Activated CD4-positive, alpha-beta T cell treated with anti-CD3 and anti-CD28 coated beads, Interleukin-2, amount 10 ng/mL, durations not matched to agents 24 days and 14 days (primary cell): ENCODE measurements at regions of chr1 and their contacts with region 1.

Region 1: DNA sequence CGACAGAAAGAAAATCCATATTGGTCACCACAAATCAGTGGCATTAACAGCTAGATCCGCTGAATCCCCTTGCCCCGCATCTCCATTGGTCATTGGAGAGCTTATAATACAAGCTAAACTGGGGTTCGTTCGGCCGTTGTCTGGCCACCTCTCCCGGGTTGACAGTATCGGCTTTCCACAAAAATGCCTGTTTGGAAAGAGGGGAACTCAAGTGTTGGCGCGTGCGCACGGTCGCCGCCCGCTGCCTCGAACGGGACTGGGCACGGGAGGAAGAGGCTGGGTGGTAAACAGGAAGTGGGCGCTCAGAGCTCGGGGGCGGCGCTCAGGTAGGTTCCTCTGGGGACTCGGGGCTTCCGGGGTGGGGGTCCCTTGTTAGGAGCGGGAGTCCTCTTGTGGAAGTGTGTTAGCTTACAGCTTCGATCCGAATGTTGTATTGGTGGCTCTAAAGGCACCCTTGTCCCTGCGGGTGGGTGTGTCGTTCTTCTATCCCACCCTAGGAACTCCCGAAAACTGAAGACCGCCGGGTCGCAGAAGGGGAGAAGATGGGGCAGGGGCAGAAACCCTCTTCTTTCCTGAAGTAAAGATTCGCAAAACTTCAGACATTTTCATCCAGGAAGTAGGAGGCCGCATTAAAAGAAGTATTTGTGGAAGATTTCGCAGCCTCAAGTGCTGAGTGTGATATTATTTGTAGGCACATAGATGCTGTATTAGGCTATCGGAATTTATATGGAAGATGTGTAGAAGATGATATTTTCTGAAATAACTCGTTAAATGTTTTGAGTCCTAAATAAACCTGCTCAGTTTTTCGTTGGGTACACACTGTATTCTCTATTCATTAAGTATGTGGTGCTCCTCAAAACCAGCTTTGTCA is 962 bp downstream of the BROX start:
- DNase-seq: peak; percentile 96
- H3K4me3 Mint-ChIP-seq: peak overlapping the region; percentile 99
- H3K27ac Mint-ChIP-seq: peak overlapping the region; percentile 94
- H3K4me1 Mint-ChIP-seq: peaks cover 39% of the 10 kb centered on the region
- H3K27me3 Mint-ChIP-seq: no peaks in the 10 kb centered on the region

Region 2: DNA sequence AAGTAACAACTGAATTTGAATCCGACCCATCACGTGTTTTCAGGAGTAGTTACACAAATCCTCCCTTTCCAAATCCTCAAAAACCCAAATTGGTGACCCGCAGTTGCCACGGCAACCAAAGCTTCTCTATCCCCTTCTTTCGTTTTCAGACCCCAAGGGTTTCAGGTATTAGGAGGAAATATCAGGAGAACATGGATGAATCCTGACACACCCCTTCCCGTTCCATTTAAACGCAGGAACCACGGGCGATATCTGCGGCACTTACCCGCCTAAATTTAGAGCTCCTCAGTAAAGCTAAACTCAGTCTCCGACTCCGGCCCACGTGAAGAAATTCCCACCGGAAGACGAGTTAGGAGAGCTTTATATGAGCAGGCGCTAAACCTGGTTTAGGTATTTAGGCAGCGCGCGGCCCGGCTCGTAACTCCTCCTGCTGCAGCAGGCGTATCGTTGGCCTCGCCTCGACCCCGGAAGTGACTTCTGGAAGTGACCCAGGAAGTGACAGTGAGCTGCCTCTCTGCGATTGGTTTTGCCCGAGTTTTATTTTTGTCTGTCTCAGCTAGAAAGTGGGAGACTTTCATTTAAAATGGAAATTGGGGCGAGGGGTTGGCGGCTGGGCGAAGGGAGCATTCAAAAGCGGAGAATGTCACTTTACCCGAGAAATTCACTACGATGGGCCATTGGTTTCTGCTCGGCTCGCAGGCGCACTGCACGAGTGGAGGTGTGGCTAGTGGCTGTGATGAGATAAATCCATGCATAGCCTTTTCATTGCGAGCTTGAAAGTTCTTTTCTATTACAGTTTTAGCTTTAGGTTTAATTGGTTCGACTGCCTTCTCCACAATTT is 123.6 kb before region 1 on chr1 and contains the start of gene TAF1A:
- intact Hi-C with region 1: loop called (anchors 1 kb)
- DNase-seq: peak; percentile 95
- H3K4me3 Mint-ChIP-seq: peak within 1 kb of the TSS; percentile 96
- H3K27ac Mint-ChIP-seq: peak within 1 kb of the TSS; percentile 95
- H3K4me1 Mint-ChIP-seq: peaks cover 33% of the 10 kb centered on the region
- H3K27me3 Mint-ChIP-seq: peaks cover 4% of the 10 kb centered on the region
- total RNA-seq, gene TAF1A: 23.1 and 24.4 TPM in 2 replicates

Region 3: GRCh38 chr1:222654849-222655248 is 58.5 kb before region 1 on chr1:
- intact Hi-C with region 1: loop called (anchors 2 kb)
- DNase-seq: peak; percentile 92
- H3K4me3 Mint-ChIP-seq: peak overlapping the region; percentile 69
- H3K27ac Mint-ChIP-seq: peak overlapping the region; percentile 86
- H3K4me1 Mint-ChIP-seq: peaks cover 51% of the 10 kb centered on the region
- H3K27me3 Mint-ChIP-seq: no peaks in the 10 kb centered on the region

Region 4: DNA sequence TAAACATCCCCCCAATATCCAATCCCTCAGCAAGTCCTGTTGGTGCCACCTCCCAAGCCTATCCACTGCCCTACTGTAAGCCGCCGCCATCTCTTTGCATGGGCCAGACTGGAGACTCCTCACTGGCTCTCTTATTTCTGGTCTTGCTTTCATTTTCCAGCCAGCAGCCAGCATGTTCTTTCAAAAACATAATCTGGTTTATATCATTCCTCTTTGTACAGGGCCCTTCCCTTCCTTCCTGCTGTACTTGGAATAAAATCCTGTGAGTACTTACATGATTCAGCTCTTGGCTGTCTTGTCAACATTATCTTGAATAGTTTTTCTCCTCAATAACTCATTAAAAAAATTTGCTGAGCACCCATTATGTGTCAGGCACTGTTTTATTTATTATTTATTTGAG is 401.5 kb after region 1 on chr1:
- intact Hi-C with region 1: no loop called
- DNase-seq: no peak
- H3K4me3 Mint-ChIP-seq: no peak overlapping the region
- H3K27ac Mint-ChIP-seq: no peak overlapping the region
- H3K4me1 Mint-ChIP-seq: peaks cover 1% of the 10 kb centered on the region
- H3K27me3 Mint-ChIP-seq: peaks cover 2% of the 10 kb centered on the region

Region 5: GRCh38 chr1:223712194-223712849 is 999.0 kb after region 1 on chr1 and contains the start of gene CAPN2:
- intact Hi-C with region 1: loop called (anchors 10 kb)
- DNase-seq: peak; percentile 90
- H3K4me3 Mint-ChIP-seq: peak within 1 kb of the TSS; percentile 96
- H3K27ac Mint-ChIP-seq: peak within 1 kb of the TSS; percentile 87
- H3K4me1 Mint-ChIP-seq: peaks cover 66% of the 10 kb centered on the region
- H3K27me3 Mint-ChIP-seq: peaks cover 7% of the 10 kb centered on the region
- total RNA-seq, gene CAPN2: 69.6 and 73.1 TPM in 2 replicates

Region 6: GRCh38 chr1:223845810-223846682 is 1132.7 kb after region 1 on chr1 and contains the start of gene TP53BP2:
- intact Hi-C with region 1: loop called (anchors 5 kb)
- DNase-seq: peak; percentile 96
- H3K4me3 Mint-ChIP-seq: peak within 1 kb of the TSS; percentile 91
- H3K27ac Mint-ChIP-seq: peak within 1 kb of the TSS; percentile 97
- H3K4me1 Mint-ChIP-seq: peaks cover 31% of the 10 kb centered on the region
- H3K27me3 Mint-ChIP-seq: peaks cover 5% of the 10 kb centered on the region
- total RNA-seq, gene TP53BP2: 37.1 and 47.7 TPM in 2 replicates